Ovary (tissue), 10 donors: ENCODE measurements at regions of chr14 and their contacts with region 1.

Region 1: GRCh38 chr14:67704484-67705089 is 2.9 kb downstream of the RDH12 start:
- DNase-seq: no peak
- H3K4me3 ChIP-seq: no peak overlapping the region
- H3K27ac ChIP-seq: no peak overlapping the region
- H3K4me1 ChIP-seq: no peaks in the 10 kb centered on the region
- H3K27me3 ChIP-seq: no peaks in the 10 kb centered on the region
- CTCF ChIP-seq: peak; percentile 38 to 56 (median 45)
- EP300 ChIP-seq: no peak
- POLR2A ChIP-seq: no peak

Region 2: DNA sequence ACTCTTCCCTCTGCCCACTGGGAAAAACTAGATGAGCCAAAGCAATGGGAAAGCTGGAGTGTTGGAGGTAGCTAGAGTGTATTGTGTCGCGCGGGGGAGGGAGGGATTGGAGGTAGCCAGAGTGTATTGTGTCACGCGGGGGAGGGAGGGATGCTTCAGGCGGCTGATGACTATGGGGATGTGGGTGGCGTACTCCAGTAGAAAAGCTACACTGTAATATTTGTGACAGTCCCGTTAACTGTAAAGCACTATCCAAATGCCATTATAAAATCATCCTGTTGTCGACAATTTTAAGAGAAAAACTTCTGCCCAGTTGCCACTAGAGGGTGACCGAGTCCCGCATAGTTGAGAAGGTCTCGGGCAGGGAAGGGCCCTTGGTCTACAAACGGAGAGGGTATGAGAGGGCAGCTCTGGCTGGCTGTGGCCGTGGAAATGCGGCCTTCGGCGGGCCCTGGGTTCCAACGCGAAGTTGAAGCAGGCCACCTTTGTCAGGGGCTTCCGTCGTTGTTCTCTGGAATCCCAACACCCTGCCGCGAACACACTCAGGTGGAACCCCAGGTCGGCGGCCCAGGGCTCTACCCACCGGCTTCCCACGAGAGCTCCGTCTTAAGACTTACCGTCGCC is 277.5 kb before region 1 on chr14:
- intact Hi-C with region 1: loop called in 2 of 4 experiments (anchors 5 to 10 kb)
- DNase-seq: peak; percentile 53 to 74 (median 69)
- H3K4me3 ChIP-seq: no peak overlapping the region
- H3K27ac ChIP-seq: no peak overlapping the region
- H3K4me1 ChIP-seq: no peaks in the 10 kb centered on the region
- H3K27me3 ChIP-seq: no peaks in the 10 kb centered on the region
- CTCF ChIP-seq: peak; percentile 46 to 56 (median 46)
- EP300 ChIP-seq: no peak
- POLR2A ChIP-seq: no peak

Region 3: GRCh38 chr14:67526676-67527459 is 177.7 kb before region 1 on chr14:
- intact Hi-C with region 1: loop called in 1 of 4 experiments (anchors 10 kb)
- DNase-seq: peak in 1 of 5 donors; percentile 29
- H3K4me3 ChIP-seq: no peak overlapping the region
- H3K27ac ChIP-seq: no peak overlapping the region
- H3K4me1 ChIP-seq: no peaks in the 10 kb centered on the region
- H3K27me3 ChIP-seq: no peaks in the 10 kb centered on the region
- CTCF ChIP-seq: peak in 1 of 3 donors; percentile 20
- EP300 ChIP-seq: no peak
- POLR2A ChIP-seq: no peak

Region 4: GRCh38 chr14:67571272-67571850 is 133.2 kb before region 1 on chr14:
- intact Hi-C with region 1: loop called in 1 of 4 experiments (anchors 10 kb)
- DNase-seq: peak; percentile 21 to 63 (median 44)
- H3K4me3 ChIP-seq: no peak overlapping the region
- H3K27ac ChIP-seq: no peak overlapping the region
- H3K4me1 ChIP-seq: no peaks in the 10 kb centered on the region
- H3K27me3 ChIP-seq: no peaks in the 10 kb centered on the region
- CTCF ChIP-seq: peak in 1 of 3 donors; percentile 43
- EP300 ChIP-seq: no peak
- POLR2A ChIP-seq: no peak

Region 5: GRCh38 chr14:67583711-67584644 is 120.6 kb before region 1 on chr14:
- intact Hi-C with region 1: loop called in 3 of 4 experiments (anchors 5 to 10 kb)
- DNase-seq: peak in 1 of 5 donors; percentile 39
- H3K4me3 ChIP-seq: no peak overlapping the region
- H3K27ac ChIP-seq: no peak overlapping the region
- H3K4me1 ChIP-seq: no peaks in the 10 kb centered on the region
- H3K27me3 ChIP-seq: no peaks in the 10 kb centered on the region
- CTCF ChIP-seq: peak; percentile 23 to 56 (median 52)
- EP300 ChIP-seq: no peak
- POLR2A ChIP-seq: no peak

Region 6: DNA sequence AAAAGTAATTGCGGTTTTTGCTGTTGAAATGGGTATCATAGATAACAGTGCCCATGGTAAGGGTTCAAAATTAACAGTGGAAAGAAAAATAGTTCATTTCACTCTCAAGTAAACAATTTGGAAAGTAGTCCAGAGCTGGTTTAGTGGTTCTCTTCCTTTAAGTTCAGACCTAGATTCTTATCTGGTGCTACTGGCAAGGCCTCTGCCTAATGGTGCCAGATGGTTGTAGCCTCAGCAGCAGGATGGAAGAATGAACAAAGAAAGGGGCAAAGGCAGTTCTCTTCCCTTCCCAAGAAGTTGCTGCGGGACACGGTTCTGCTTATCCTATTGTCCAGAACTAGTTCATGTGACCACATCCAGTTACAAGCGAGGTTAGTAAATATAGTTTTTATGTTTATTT is 74.4 kb before region 1 on chr14:
- intact Hi-C with region 1: no loop called
- DNase-seq: no peak
- H3K4me3 ChIP-seq: no peak overlapping the region
- H3K27ac ChIP-seq: no peak overlapping the region
- H3K4me1 ChIP-seq: no peaks in the 10 kb centered on the region
- H3K27me3 ChIP-seq: no peaks in the 10 kb centered on the region
- CTCF ChIP-seq: no peak
- EP300 ChIP-seq: no peak
- POLR2A ChIP-seq: no peak

Region 7: DNA sequence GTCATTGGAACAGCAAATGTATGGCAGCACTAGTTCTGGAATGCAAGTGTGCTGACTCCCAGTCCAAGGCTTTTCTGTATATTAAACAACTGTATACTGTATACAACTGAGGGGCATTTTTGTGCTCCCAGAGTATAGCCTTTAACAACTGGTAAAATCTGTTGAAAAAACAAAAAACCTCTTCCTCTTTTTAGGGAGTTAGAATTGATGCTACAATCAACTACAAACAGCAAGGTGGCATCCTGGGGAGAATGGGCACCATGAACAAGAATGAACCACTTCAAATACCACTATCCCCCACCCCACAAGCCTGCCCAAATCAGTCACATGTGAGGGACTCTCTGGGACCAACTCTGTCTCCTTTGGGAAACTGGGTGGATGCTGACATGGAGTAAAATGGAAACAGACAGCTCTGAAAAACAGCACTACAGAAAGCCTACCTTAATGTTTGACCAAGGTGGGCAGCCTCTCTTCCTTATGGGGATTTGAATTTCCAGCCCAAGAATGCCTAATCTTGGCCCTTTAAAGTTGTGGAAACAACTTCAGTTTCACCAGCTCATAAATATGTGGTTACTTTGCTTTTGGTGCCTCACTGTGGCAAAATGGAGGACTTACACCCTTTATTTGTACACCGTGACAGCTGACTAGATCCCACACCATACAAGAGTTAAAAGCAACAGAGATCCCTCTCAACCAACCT is 37.7 kb before region 1 on chr14:
- intact Hi-C with region 1: no loop called
- DNase-seq: peak in 1 of 5 donors; percentile 23
- H3K4me3 ChIP-seq: no peak overlapping the region
- H3K27ac ChIP-seq: no peak overlapping the region
- H3K4me1 ChIP-seq: no peaks in the 10 kb centered on the region
- H3K27me3 ChIP-seq: no peaks in the 10 kb centered on the region
- CTCF ChIP-seq: peak; percentile 20 to 58 (median 46)
- EP300 ChIP-seq: no peak
- POLR2A ChIP-seq: no peak

Region 8: GRCh38 chr14:67690011-67690410 is 14.6 kb before region 1 on chr14:
- intact Hi-C with region 1: no loop called
- DNase-seq: no peak
- H3K4me3 ChIP-seq: no peak overlapping the region
- H3K27ac ChIP-seq: no peak overlapping the region
- H3K4me1 ChIP-seq: peaks cover 5% of the 10 kb centered on the region
- H3K27me3 ChIP-seq: no peaks in the 10 kb centered on the region
- CTCF ChIP-seq: no peak
- EP300 ChIP-seq: no peak
- POLR2A ChIP-seq: no peak